Caco-2 (cell line): ENCODE measurements at regions of chr2 and their contacts with region 1.

Region 1: GRCh38 chr2:101820519-101820918 is 123.0 kb downstream of the MAP4K4 start:
- DNase-seq: no peak
- H3K4me3 ChIP-seq: no peak overlapping the region
- H3K4me3 Mint-ChIP-seq: no peak overlapping the region
- H3K27ac Mint-ChIP-seq: no peak overlapping the region
- H3K4me1 ChIP-seq: peaks cover 28% of the 10 kb centered on the region
- H3K4me1 Mint-ChIP-seq: peaks cover 55% of the 10 kb centered on the region
- H3K27me3 ChIP-seq: no peaks in the 10 kb centered on the region
- H3K27me3 Mint-ChIP-seq: no peaks in the 10 kb centered on the region
- CTCF ChIP-seq: no peak

Region 2: DNA sequence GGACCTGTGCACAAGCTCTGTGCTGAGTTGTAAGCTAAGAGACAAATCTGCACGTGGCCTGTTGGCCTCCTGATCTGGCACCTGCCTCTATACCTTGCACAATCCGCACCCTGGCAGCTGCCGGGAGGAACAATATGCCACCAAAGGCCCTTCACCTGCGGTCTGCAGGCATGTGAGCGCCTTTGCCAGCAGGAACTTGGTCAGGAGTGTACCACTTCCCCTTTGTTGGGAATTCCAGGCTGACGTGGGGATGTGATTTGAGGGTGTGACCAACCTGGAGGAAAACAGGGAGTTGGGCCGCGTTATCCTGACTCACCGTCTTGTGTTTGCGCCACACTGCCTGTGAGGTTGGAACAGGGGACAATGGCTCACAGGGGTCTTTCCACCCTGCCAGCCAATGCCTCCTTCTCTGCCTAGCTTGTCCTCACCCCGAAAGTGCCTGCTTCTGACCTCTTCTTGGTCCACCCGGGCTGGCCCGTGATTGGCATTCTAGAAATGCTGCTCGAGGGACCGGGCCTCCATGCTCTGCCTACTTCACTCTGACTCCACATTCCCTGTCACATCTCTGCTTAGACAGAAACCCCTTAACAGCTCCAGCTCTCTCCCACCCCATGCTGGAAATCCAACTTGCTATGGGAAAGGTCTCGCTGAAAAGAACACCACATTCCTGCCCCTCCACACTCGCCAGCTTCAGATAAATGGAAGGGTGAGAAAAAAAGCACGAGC is 190.1 kb before region 1 on chr2:
- CTCF ChIA-PET with region 1: no interaction called
- POLR2A ChIA-PET with region 1: no interaction called
- intact Hi-C with region 1: no loop called
- DNase-seq: no peak
- H3K4me3 ChIP-seq: no peak overlapping the region
- H3K4me3 Mint-ChIP-seq: no peak overlapping the region
- H3K27ac Mint-ChIP-seq: no peak overlapping the region
- H3K4me1 ChIP-seq: peaks cover 13% of the 10 kb centered on the region
- H3K4me1 Mint-ChIP-seq: peaks cover 13% of the 10 kb centered on the region
- H3K27me3 ChIP-seq: no peaks in the 10 kb centered on the region
- H3K27me3 Mint-ChIP-seq: no peaks in the 10 kb centered on the region
- CTCF ChIP-seq: no peak

Region 3: DNA sequence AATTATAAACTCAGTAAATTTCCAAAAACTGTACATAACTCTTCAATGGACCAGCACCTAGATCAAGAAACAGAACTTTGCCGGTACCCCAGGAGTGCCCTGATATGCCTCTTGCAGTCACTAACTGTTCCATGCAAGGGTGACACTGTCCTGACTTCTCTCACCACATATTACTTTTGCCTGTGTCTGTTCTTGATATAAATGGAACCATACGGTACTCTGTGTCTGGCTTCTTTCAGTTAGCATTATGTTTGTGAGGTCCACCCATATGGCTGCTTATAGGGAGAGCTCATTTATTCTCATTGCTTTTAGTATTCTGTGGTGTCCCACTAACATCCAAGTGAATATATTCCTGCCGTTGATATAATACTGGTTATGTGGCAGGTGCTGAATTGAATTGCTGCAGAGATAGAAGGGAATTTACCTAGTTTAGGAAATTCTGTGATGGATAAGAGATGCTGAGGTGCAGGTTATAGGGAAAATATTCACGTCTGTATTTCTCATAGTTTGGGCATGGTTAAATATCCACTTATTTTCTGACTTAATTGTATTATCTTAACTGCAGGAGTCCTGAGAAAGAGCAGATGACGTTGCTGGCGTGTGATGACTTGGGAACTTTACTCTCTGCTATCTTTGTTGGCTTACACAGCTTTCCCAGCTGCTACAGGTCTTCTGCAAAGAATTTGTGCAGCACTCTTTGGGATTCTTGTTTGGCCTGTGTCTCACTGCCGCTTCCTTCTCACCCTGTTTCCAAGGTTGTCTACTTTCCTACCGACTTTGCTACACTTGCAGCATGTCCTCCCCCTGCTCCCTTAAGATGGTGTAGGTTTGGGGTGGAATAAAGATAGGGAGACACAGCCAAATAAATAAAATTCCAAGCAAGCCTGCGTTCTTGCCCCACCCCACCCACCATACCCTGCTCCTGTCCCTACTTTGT is 15.1 kb before region 1 on chr2:
- CTCF ChIA-PET with region 1: interaction called, 3 read pairs
- POLR2A ChIA-PET with region 1: no interaction called
- intact Hi-C with region 1: loop called (anchors 2 kb)
- DNase-seq: no peak
- H3K4me3 ChIP-seq: no peak overlapping the region
- H3K4me3 Mint-ChIP-seq: peak overlapping the region; percentile 56
- H3K27ac Mint-ChIP-seq: peak overlapping the region; percentile 63
- H3K4me1 ChIP-seq: peaks cover 58% of the 10 kb centered on the region
- H3K4me1 Mint-ChIP-seq: peaks cover 54% of the 10 kb centered on the region
- H3K27me3 ChIP-seq: no peaks in the 10 kb centered on the region
- H3K27me3 Mint-ChIP-seq: no peaks in the 10 kb centered on the region
- CTCF ChIP-seq: no peak

Region 4: GRCh38 chr2:101998896-101999789 is 178.6 kb after region 1 on chr2:
- CTCF ChIA-PET with region 1: no interaction called
- POLR2A ChIA-PET with region 1: no interaction called
- intact Hi-C with region 1: no loop called
- DNase-seq: peak; percentile 77 to 82
- H3K4me3 ChIP-seq: peak overlapping the region; percentile 21
- H3K4me3 Mint-ChIP-seq: peak overlapping the region; percentile 61
- H3K27ac Mint-ChIP-seq: peak overlapping the region; percentile 58
- H3K4me1 ChIP-seq: peaks cover 49% of the 10 kb centered on the region
- H3K4me1 Mint-ChIP-seq: peaks cover 7% of the 10 kb centered on the region
- H3K27me3 ChIP-seq: no peaks in the 10 kb centered on the region
- H3K27me3 Mint-ChIP-seq: no peaks in the 10 kb centered on the region
- CTCF ChIP-seq: peak in 1 of 2 experiments; percentile 24

Region 5: GRCh38 chr2:102033031-102033749 is 212.7 kb after region 1 on chr2:
- CTCF ChIA-PET with region 1: no interaction called
- POLR2A ChIA-PET with region 1: no interaction called
- intact Hi-C with region 1: no loop called
- DNase-seq: no peak
- H3K4me3 ChIP-seq: no peak overlapping the region
- H3K4me3 Mint-ChIP-seq: no peak overlapping the region
- H3K27ac Mint-ChIP-seq: no peak overlapping the region
- H3K4me1 ChIP-seq: peaks cover 4% of the 10 kb centered on the region; the same call in 1 of the 2 replicates
- H3K4me1 Mint-ChIP-seq: peaks cover 9% of the 10 kb centered on the region
- H3K27me3 ChIP-seq: no peaks in the 10 kb centered on the region
- H3K27me3 Mint-ChIP-seq: no peaks in the 10 kb centered on the region
- CTCF ChIP-seq: no peak

Region 6: DNA sequence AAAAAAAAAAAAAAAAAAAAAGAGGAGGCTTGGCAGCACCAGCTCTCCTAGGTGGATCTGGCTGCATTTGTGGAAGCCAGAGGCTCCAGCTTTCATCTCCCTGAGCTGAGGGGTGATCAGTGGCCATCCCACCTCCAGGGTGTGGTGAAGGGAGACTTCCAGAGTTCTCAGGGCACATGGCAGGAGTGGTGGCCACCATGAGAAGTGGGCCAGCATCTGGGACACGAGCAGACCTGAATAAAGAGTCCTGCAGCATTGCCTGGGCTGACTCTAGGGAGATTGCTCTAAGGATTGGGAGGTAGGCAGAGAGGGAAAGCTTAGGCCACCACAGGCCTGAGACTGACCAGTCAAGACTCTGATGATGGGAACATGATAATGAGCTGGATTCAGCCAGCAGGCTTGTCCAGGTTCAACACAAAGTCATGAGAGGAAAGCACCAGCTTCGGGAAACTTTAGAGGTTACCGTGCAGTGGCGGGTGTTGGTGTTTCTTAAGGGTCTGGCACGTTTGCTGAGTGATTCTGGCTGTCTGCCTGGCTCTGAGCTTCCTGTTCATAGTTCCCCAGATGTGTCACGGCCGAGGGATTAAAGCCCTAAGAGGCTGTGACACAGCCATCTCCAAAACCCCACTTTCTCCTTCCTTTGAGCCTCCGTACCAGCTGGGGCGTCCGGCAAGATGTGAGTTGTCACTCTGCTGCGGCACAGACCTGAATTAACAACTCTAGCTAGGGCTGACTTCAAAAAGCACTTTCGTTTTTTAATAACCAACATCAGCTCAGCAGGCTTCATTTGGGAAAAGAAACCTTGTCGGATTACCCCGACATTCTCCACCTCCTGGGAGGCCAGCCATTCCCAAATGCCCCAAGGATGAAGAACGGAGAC is 283.7 kb after region 1 on chr2:
- CTCF ChIA-PET with region 1: no interaction called
- POLR2A ChIA-PET with region 1: no interaction called
- intact Hi-C with region 1: no loop called
- DNase-seq: no peak
- H3K4me3 ChIP-seq: no peak overlapping the region
- H3K4me3 Mint-ChIP-seq: no peak overlapping the region
- H3K27ac Mint-ChIP-seq: peak overlapping the region; percentile 72
- H3K4me1 ChIP-seq: peaks cover 64% of the 10 kb centered on the region
- H3K4me1 Mint-ChIP-seq: peaks cover 62% of the 10 kb centered on the region
- H3K27me3 ChIP-seq: no peaks in the 10 kb centered on the region
- H3K27me3 Mint-ChIP-seq: no peaks in the 10 kb centered on the region
- CTCF ChIP-seq: no peak